Aorta (tissue), 5 donors: ENCODE measurements at regions of chr12 and their contacts with region 1.

Region 1: GRCh38 chr12:401235-402028 is at the start of gene CCDC77:
- DNase-seq: peak; percentile 92 to 94
- ATAC-seq: peak; percentile 100
- H3K4me3 ChIP-seq: peak within 1 kb of the TSS; percentile 57 to 60
- H3K27ac ChIP-seq: peak within 1 kb of the TSS in 1 of 2 donors; percentile 21
- H3K4me1 ChIP-seq: no peaks in the 10 kb centered on the region
- H3K27me3 ChIP-seq: no peaks in the 10 kb centered on the region
- total RNA-seq, gene CCDC77: 3.4 to 4.4 TPM

Region 2: GRCh38 chr12:356276-356988 is 45.0 kb before region 1 on chr12:
- intact Hi-C with region 1: no loop called
- DNase-seq: no peak
- ATAC-seq: no peak
- H3K4me3 ChIP-seq: no peak overlapping the region
- H3K27ac ChIP-seq: no peak overlapping the region
- H3K4me1 ChIP-seq: no peaks in the 10 kb centered on the region
- H3K27me3 ChIP-seq: no peaks in the 10 kb centered on the region

Region 3: GRCh38 chr12:389139-390096 is 12.0 kb before region 1 on chr12 and contains the start of gene KDM5A:
- intact Hi-C with region 1: loop called in 1 of 2 experiments (anchors 1 kb)
- DNase-seq: peak; percentile 94 to 96
- ATAC-seq: peak; percentile 99
- H3K4me3 ChIP-seq: peak within 1 kb of the TSS; percentile 92 to 98
- H3K27ac ChIP-seq: peak within 1 kb of the TSS; percentile 88 to 95
- H3K4me1 ChIP-seq: no peaks in the 10 kb centered on the region
- H3K27me3 ChIP-seq: no peaks in the 10 kb centered on the region
- total RNA-seq, gene KDM5A: 60.1 to 90.5 TPM

Region 4: DNA sequence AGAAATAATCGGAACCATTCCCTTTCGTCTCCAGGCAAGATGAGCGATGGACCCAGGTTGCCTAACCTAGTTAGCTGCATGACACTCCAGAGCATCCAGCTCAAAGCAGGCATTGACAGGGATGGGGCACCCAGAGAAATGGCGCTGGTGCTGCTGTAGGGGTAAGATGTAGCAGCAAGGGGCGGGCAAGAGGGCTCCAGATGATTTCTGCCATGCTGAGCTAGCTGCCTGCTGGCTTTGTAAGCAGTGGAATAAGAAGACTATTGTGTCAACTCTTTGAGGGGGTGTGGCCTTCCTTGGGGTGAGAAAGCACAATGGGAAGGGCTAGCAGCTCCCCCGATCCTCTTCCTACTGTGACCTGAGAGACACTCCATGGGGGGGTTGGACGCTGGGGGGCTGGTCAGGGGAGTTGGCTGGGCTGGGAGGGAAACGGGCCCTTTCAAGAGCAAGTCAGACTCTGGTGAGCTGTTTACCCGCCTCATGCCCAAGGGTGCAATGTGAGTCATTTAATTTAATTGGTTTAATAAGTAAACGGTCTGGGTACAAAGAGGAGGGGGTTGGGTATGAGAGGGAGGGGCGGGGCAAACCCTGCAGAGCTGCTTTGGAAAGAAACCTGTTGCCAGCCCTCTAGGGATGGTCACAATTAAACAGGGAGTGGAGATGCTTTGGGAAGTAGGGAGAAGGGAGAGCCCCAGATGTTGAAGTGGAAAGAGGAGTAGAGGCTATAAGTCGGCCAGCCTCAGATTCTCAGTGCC is 108.8 kb after region 1 on chr12:
- intact Hi-C with region 1: no loop called
- DNase-seq: no peak
- ATAC-seq: no peak
- H3K4me3 ChIP-seq: no peak overlapping the region
- H3K27ac ChIP-seq: no peak overlapping the region
- H3K4me1 ChIP-seq: no peaks in the 10 kb centered on the region
- H3K27me3 ChIP-seq: no peaks in the 10 kb centered on the region

Region 5: DNA sequence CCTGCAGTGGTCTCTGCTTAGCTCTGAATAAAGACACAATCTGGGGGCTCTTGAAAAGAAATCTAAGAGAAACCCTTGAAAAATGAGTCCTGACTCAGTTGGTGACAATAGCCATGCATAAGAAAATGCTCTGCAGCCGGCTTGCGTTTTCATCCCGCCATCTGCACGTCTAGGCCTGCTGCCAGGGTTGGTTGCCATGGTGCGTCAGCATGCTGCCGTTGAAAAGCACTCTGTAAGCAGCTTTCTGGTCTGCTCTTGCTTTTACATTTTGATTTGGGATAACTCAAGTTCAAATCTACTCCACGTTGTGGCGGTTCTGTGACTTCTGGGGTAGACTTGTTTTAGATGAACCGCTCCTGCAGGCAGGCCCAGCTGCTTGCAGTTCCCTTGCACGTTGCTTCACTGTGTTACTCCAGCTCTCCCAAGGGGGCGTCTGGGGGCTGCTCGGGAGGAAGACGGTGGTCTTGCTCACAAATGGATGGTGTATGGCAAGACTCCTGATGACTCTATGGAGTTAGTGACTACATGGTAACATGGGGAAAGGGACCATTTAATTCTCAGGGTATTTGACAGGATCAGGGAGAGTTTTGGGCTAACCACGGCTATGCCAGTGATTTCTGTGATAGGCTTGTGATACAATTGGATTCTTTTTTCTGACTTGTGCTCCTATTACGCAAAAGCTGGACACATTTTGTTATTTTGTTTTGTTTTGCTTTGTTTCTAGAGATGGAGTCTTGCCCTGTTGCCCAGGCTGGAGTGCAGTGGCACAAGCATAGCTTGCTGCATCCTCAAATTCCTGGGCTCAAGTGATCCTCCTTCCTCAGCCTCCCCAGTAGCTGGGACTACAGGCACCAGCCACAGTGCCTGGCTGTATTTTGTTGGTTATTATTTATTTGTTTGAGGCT is 1243.4 kb after region 1 on chr12:
- intact Hi-C with region 1: no loop called
- DNase-seq: peak; percentile 91 to 92
- ATAC-seq: peak; percentile 51
- H3K4me3 ChIP-seq: no peak overlapping the region
- H3K27ac ChIP-seq: no peak overlapping the region
- H3K4me1 ChIP-seq: no peaks in the 10 kb centered on the region
- H3K27me3 ChIP-seq: no peaks in the 10 kb centered on the region